Heart right ventricle (tissue), 16 donors: ENCODE measurements at regions of chr17 and their contacts with region 1.

Region 1: GRCh38 chr17:2828397-2829038 is 32.3 kb downstream of the RAP1GAP2 start:
- DNase-seq: peak; percentile 70 to 84
- ATAC-seq: peak; percentile 61 to 89 (median 88)
- H3K4me3 ChIP-seq: no peak overlapping the region
- H3K27ac ChIP-seq: no peak overlapping the region
- H3K4me1 ChIP-seq: peaks cover 0 to 18% (median 3%) of the 10 kb centered on the region in 9 donors
- H3K27me3 ChIP-seq: peaks cover 0 to 7% (median 0%) of the 10 kb centered on the region in 7 donors
- CTCF ChIP-seq: peak; percentile 84 to 96 (median 94)

Region 2: GRCh38 chr17:2892305-2892971 is 63.9 kb after region 1 on chr17:
- intact Hi-C with region 1: no loop called
- DNase-seq: no peak
- ATAC-seq: peak in 6 of 8 donors; percentile 48 to 92 (median 69)
- H3K4me3 ChIP-seq: no peak overlapping the region
- H3K27ac ChIP-seq: no peak overlapping the region
- H3K4me1 ChIP-seq: peaks cover 0 to 15% (median 0%) of the 10 kb centered on the region in 9 donors
- H3K27me3 ChIP-seq: no peaks in the 10 kb centered on the region
- CTCF ChIP-seq: no peak

Region 3: DNA sequence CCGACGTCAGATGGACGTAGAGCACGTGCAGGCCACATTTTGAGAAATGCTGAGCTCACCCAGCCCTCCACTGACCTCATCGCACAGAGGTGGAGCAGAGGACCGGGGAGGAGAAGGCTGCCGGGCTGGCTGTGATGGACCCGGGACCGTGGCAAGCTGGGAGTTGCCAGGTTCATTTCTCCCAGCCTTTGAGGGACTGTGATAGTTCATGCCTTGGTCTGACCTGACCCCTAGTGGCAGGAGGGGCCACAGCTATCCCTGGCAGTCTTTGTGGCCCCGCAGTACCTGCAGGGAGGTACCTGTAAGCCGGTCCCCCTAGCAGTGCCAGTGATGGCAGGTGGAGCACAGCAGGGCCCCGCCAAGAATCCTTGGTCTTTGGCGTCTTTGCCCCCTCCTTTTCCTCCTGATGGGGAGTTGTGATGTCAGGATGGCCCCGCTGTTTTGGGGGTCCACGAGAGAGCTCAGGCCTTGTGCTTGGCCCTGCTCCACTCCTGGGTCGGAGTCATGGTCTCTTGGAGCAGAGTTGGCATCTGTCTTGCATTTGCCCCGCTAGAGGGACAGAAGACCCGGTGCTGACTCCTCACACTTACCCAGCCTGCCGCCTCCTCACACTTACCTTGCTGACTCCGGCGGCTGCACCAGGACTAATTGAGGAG is 184.5 kb after region 1 on chr17:
- intact Hi-C with region 1: loop called (anchors 1 to 5 kb)
- DNase-seq: peak; percentile 53 to 64
- ATAC-seq: peak; percentile 76 to 93 (median 90)
- H3K4me3 ChIP-seq: no peak overlapping the region
- H3K27ac ChIP-seq: no peak overlapping the region
- H3K4me1 ChIP-seq: peaks cover 0 to 12% (median 0%) of the 10 kb centered on the region in 9 donors
- H3K27me3 ChIP-seq: no peaks in the 10 kb centered on the region
- CTCF ChIP-seq: peak; percentile 74 to 90 (median 86)